Caco-2 (cell line): ENCODE measurements at regions of chr11 and their contacts with region 1.

Region 1: GRCh38 chr11:94602430-94603372 is 35.5 kb downstream of the PIWIL4 start:
- DNase-seq: peak; percentile 58 to 79
- H3K4me3 ChIP-seq: no peak overlapping the region
- H3K4me3 Mint-ChIP-seq: peak overlapping the region; percentile 63
- H3K27ac Mint-ChIP-seq: peak overlapping the region; percentile 68
- H3K4me1 ChIP-seq: peaks cover 30% of the 10 kb centered on the region
- H3K4me1 Mint-ChIP-seq: peaks cover 20% of the 10 kb centered on the region
- H3K27me3 ChIP-seq: no peaks in the 10 kb centered on the region
- H3K27me3 Mint-ChIP-seq: no peaks in the 10 kb centered on the region
- CTCF ChIP-seq: peak in 1 of 2 experiments; percentile 39

Region 2: GRCh38 chr11:94519478-94520084 is 83.1 kb before region 1 on chr11:
- CTCF ChIA-PET with region 1: interaction called, 19 read pairs
- POLR2A ChIA-PET with region 1: no interaction called
- intact Hi-C with region 1: loop called (anchors 1 kb)
- DNase-seq: peak in 1 of 2 experiments; percentile 51
- H3K4me3 ChIP-seq: no peak overlapping the region
- H3K4me3 Mint-ChIP-seq: no peak overlapping the region
- H3K27ac Mint-ChIP-seq: no peak overlapping the region
- H3K4me1 ChIP-seq: peaks cover 11% of the 10 kb centered on the region
- H3K4me1 Mint-ChIP-seq: no peaks in the 10 kb centered on the region
- H3K27me3 ChIP-seq: no peaks in the 10 kb centered on the region
- H3K27me3 Mint-ChIP-seq: peaks cover 5% of the 10 kb centered on the region
- CTCF ChIP-seq: peak; percentile 78 to 86

Region 3: GRCh38 chr11:94588371-94588952 is 14.2 kb before region 1 on chr11:
- CTCF ChIA-PET with region 1: interaction called, 7 read pairs
- POLR2A ChIA-PET with region 1: no interaction called
- intact Hi-C with region 1: loop called (anchors 1 kb)
- DNase-seq: peak; percentile 87 to 93
- H3K4me3 ChIP-seq: no peak overlapping the region
- H3K4me3 Mint-ChIP-seq: peak overlapping the region; percentile 57
- H3K27ac Mint-ChIP-seq: peak overlapping the region; percentile 34
- H3K4me1 ChIP-seq: peaks cover 61% of the 10 kb centered on the region
- H3K4me1 Mint-ChIP-seq: peaks cover 60% of the 10 kb centered on the region
- H3K27me3 ChIP-seq: no peaks in the 10 kb centered on the region
- H3K27me3 Mint-ChIP-seq: no peaks in the 10 kb centered on the region
- CTCF ChIP-seq: no peak